Gastrocnemius medialis (tissue), 4 donors: ENCODE measurements at regions of chr16 and their contacts with region 1.

Region 1: DNA sequence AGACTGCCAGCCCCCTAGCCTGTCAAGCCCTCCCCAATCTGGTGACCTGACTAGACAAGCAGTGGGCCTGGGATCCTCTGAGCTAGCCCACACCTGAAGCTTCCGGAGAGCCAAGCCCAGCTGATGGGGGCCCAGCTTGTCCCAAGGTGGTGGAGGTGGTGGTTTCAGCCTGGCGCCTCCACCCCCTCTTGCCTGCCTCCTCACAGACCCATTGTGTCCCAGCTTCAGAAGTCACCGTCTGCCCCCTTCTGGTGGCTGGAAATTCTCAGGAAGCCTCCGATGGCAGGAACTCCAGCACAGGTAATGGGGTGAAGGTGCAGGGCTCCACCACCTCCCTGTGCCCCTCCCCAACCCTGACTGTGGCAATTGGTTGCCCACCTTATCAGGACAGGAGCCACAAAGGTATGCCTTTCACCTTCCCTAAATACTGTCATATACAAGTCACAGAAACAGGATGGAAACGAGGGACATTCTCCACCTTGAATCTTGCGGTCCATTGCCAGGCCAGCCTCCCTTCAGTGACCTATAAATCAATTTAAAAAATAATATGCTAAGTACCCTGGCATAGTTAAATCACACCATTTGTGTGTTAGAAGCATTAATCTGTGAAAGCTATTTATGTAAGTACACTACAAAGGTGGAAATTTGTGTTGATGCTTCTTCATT is 66.0 kb upstream of the ZNF423 start:
- DNase-seq: peak; percentile 11 to 23
- ATAC-seq: peak in 1 of 2 donors; percentile 55
- H3K4me3 ChIP-seq: no peak overlapping the region
- H3K27ac ChIP-seq: no peak overlapping the region
- H3K4me1 ChIP-seq: no peaks in the 10 kb centered on the region
- H3K27me3 ChIP-seq: no peaks in the 10 kb centered on the region
- CTCF ChIP-seq: peak in 4 of 5 experiments; percentile 50 to 56 (median 56)
- POLR2A ChIP-seq: no peak

Region 2: GRCh38 chr16:49407873-49408550 is 513.9 kb before region 1 on chr16:
- in situ Hi-C with region 1: loop called (anchors 5 to 25 kb)
- intact Hi-C with region 1: loop called (anchors 1 kb)
- DNase-seq: peak; percentile 57 to 73
- ATAC-seq: peak; percentile 88 to 92
- H3K4me3 ChIP-seq: no peak overlapping the region
- H3K27ac ChIP-seq: no peak overlapping the region
- H3K4me1 ChIP-seq: peaks cover 0 to 3% of the 10 kb centered on the region in 2 donors
- H3K27me3 ChIP-seq: peaks cover 0 to 5% (median 0%) of the 10 kb centered on the region in 3 donors
- CTCF ChIP-seq: peak; percentile 85 to 95 (median 88)
- POLR2A ChIP-seq: no peak

Region 3: GRCh38 chr16:49419006-49419405 is 502.9 kb before region 1 on chr16:
- in situ Hi-C with region 1: loop called in 3 of 4 experiments (anchors 5 to 25 kb)
- intact Hi-C with region 1: no loop called
- DNase-seq: no peak
- ATAC-seq: no peak
- H3K4me3 ChIP-seq: no peak overlapping the region
- H3K27ac ChIP-seq: no peak overlapping the region
- H3K4me1 ChIP-seq: no peaks in the 10 kb centered on the region
- H3K27me3 ChIP-seq: no peaks in the 10 kb centered on the region
- CTCF ChIP-seq: no peak
- POLR2A ChIP-seq: no peak

Region 4: DNA sequence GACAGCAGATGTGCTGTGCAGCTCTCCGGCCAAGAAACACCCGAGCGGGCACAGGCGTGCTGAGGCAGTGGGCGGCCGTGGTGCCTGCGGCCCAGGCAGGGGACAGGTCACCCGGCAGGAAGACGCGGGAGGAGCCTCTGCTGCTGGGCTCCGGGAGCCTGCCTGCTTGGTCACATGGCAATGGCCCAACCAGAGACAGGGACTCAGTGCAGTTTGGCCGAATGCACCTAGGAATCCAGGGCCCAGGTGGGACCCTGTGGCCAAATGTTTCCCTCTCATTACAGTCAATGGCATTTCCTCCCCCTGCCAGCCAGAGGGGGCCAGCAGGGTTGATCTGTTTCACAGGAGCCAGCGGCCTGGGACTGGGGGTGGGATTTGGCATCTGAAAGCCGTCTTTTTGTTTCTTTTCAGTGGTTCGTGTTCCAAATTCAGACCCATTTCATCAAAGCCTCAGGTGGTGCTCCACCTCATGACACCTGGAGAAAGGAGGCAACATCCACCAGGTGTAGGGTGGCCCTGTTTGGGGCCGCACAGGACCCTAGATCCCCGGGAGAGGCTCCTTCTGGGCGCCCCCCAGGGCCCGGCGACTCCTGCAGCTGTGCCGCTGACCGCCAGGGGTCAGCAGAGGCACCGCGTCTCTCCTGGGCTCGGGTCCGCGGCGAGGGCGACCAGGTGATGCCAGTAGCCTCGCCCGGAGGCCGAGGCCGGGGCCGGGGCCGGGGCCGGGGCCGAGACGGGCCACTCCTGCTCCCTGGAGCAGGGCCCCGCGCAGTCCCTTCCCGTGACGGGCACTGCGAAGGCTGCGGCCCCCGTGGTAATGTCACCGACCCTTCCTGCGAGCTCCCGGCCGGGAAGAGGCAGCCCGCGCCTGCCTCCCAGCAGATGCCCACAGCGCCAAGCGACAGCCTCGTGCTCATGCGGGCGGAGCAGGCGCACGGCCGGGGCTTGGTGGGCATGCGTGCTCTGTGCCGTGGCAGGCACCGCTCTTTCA is 429.9 kb before region 1 on chr16:
- in situ Hi-C with region 1: no loop called
- intact Hi-C with region 1: loop called (anchors 5 kb)
- DNase-seq: no peak
- ATAC-seq: peak; percentile 68 to 76
- H3K4me3 ChIP-seq: peak overlapping the region; percentile 46 to 63 (median 48)
- H3K27ac ChIP-seq: peak overlapping the region in 3 of 4 donors; percentile 11 to 47 (median 45)
- H3K4me1 ChIP-seq: peaks cover 5 to 8% of the 10 kb centered on the region in 2 donors
- H3K27me3 ChIP-seq: no peaks in the 10 kb centered on the region
- CTCF ChIP-seq: peak; percentile 80 to 98 (median 91)
- POLR2A ChIP-seq: no peak

Region 5: GRCh38 chr16:51072591-51072990 is 1150.7 kb after region 1 on chr16:
- in situ Hi-C with region 1: no loop called
- intact Hi-C with region 1: no loop called
- DNase-seq: no peak
- ATAC-seq: no peak
- H3K4me3 ChIP-seq: no peak overlapping the region
- H3K27ac ChIP-seq: no peak overlapping the region
- H3K4me1 ChIP-seq: no peaks in the 10 kb centered on the region
- H3K27me3 ChIP-seq: no peaks in the 10 kb centered on the region
- CTCF ChIP-seq: no peak
- POLR2A ChIP-seq: no peak